ENCODE measurements at regions of chr16 and their contacts with region 1.

Region 1: DNA sequence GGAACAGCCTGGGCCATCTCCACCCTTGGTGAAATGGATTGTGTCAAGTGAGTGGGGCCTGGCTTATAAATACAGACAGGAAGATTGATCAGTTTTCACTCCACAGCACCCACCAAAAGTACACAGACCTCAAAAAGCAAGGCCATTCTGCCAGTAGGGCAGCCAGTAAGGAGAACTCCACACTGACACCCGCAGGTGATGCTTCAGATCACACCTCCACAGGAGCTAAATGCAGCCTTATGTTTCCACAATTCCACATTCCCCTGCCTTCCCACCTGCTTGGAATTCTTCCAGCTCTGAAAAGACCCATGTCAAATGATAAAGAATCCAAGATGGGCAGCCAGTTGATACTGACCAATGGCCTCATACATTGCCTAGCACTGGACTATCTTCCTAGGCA is 191.1 kb downstream of the ZFHX3 start:
- DNase-seq: no peak
- H3K4me3 ChIP-seq: no peak overlapping the region
- H3K27ac ChIP-seq: no peak overlapping the region
- H3K4me1 ChIP-seq: no peaks in the 10 kb centered on the region
- H3K27me3 ChIP-seq: no peaks in the 10 kb centered on the region
- CTCF ChIP-seq: no peak
- POLR2A ChIP-seq: no peak

Region 2: GRCh38 chr16:72604375-72604774 is 252.4 kb before region 1 on chr16:
- intact Hi-C with region 1: no loop called
- DNase-seq: no peak
- H3K4me3 ChIP-seq: no peak overlapping the region
- H3K27ac ChIP-seq: no peak overlapping the region
- H3K4me1 ChIP-seq: no peaks in the 10 kb centered on the region
- H3K27me3 ChIP-seq: no peaks in the 10 kb centered on the region
- CTCF ChIP-seq: no peak
- POLR2A ChIP-seq: no peak

Region 3: DNA sequence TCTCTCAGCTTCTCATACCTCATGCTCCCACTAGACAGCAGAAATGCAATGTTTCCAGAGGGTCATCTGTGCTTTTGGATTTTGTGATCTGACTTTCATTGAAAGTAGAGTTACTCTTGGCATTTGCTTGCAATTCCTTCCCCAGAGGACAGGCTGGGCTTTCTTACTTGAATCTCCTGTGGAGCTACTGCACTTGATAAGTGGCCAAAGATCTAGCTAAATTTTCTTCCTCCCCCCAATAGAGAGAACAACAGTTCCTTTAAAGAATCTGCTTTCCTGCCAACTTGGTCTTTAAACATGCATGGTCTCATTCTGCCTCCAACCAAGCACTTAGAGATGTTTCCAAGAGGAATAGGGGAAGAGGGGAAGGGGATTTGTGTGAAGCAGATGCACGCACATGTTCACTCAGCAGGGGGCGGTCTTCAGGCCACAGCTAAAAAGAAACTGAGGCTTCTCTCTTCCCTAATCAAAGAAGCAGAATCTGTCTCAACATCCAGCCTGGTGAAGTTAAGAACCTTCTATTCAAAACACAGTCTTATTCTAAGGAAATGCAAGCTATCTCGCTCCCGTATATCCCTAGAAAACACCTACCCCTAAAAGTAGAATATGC is 38.5 kb before region 1 on chr16:
- intact Hi-C with region 1: no loop called
- DNase-seq: no peak
- H3K4me3 ChIP-seq: no peak overlapping the region
- H3K27ac ChIP-seq: no peak overlapping the region
- H3K4me1 ChIP-seq: no peaks in the 10 kb centered on the region
- H3K27me3 ChIP-seq: no peaks in the 10 kb centered on the region
- CTCF ChIP-seq: no peak
- POLR2A ChIP-seq: no peak

Region 4: GRCh38 chr16:72989579-72990551 is 133.1 kb after region 1 on chr16:
- intact Hi-C with region 1: loop called (anchors 10 kb)
- DNase-seq: peak in 1 of 2 donors; percentile 98
- H3K4me3 ChIP-seq: peak overlapping the region; percentile 16 to 23
- H3K27ac ChIP-seq: peak overlapping the region; percentile 78
- H3K4me1 ChIP-seq: peaks cover 73% of the 10 kb centered on the region
- H3K27me3 ChIP-seq: no peaks in the 10 kb centered on the region
- CTCF ChIP-seq: no peak
- POLR2A ChIP-seq: no peak